T-cell (primary cell): ENCODE measurements at regions of chr6 and their contacts with region 1.

Region 1: GRCh38 chr6:5318617-5319272 is 57.4 kb downstream of the FARS2 start:
- DNase-seq: no peak
- ATAC-seq: no peak
- H3K4me3 ChIP-seq: no peak overlapping the region
- H3K4me3 Mint-ChIP-seq: no peak overlapping the region
- H3K27ac ChIP-seq: no peak overlapping the region
- H3K27ac Mint-ChIP-seq: no peak overlapping the region
- H3K4me1 ChIP-seq: no peaks in the 10 kb centered on the region
- H3K4me1 Mint-ChIP-seq: peaks cover 19 to 51% (median 48%) of the 10 kb centered on the region in 3 donors
- H3K27me3 ChIP-seq: no peaks in the 10 kb centered on the region
- H3K27me3 Mint-ChIP-seq: no peaks in the 10 kb centered on the region

Region 2: DNA sequence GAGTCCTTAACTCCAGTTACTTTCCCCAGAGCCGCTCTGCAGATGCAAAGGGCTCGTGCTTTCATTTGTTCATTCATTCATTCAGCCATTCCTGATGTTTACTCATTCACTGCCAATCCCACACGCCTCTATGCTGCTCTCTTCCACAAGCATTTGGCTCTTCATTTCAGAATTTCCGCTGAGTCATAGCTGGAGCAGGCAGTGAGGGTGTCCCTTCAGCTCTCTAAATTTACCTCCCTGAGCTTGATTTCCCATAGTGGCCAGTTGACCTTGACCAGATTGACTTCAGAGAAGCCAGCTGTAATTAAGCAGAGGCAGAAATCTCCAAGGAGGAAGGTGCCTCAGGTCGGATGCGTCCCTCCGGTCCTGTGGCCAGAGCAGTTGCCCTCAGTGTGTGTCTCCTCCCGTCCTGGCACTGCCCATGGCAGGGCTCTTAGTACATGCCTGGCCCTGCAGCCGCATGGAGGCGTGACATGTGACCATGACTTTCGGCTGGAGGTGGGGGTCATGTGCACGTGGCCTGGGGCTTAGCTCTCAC is 916.2 kb before region 1 on chr6:
- CTCF ChIA-PET with region 1: no interaction called
- POLR2A ChIA-PET with region 1: no interaction called
- DNase-seq: no peak
- ATAC-seq: no peak
- H3K4me3 ChIP-seq: no peak overlapping the region
- H3K4me3 Mint-ChIP-seq: no peak overlapping the region
- H3K27ac ChIP-seq: no peak overlapping the region
- H3K27ac Mint-ChIP-seq: no peak overlapping the region
- H3K4me1 ChIP-seq: no peaks in the 10 kb centered on the region
- H3K4me1 Mint-ChIP-seq: no peaks in the 10 kb centered on the region
- H3K27me3 ChIP-seq: peaks cover 0 to 15% of the 10 kb centered on the region in 2 experiments
- H3K27me3 Mint-ChIP-seq: peaks cover 6 to 32% of the 10 kb centered on the region in 2 donors

Region 3: GRCh38 chr6:5190507-5190906 is 128.2 kb before region 1 on chr6:
- CTCF ChIA-PET with region 1: no interaction called
- POLR2A ChIA-PET with region 1: no interaction called
- DNase-seq: no peak
- ATAC-seq: no peak
- H3K4me3 ChIP-seq: no peak overlapping the region
- H3K4me3 Mint-ChIP-seq: no peak overlapping the region
- H3K27ac ChIP-seq: no peak overlapping the region
- H3K27ac Mint-ChIP-seq: no peak overlapping the region
- H3K4me1 ChIP-seq: no peaks in the 10 kb centered on the region
- H3K4me1 Mint-ChIP-seq: no peaks in the 10 kb centered on the region
- H3K27me3 ChIP-seq: no peaks in the 10 kb centered on the region
- H3K27me3 Mint-ChIP-seq: no peaks in the 10 kb centered on the region

Region 4: DNA sequence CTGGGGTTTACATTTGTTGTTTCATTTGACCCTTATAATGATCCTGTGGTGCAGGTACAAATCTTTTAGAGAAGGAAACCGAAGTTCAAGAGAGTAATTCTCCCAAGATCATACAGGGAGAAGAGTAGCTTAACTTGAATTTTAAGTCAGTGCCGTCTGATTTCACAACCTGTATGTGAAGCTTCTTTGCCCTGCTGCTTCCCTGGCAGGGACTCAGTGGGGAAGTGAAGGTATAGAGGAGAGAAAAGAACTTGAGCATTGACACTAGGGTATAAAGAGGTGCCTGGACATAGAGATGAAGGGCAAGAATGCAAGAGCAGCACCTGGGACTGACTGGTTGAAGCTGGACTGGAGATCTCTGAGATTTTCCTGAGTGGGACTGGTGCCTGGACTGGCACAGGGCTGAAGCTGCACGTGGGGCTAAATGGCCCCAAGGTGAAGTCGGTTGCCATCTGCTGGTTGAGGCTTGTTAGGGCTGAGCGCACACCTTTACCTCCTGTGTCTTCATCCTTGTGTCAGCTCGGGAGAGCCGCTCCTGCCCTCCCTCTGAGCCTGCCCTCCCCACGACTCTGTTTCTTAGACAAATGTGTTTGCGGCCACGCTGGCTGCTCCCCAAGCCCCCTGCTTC is 15.6 kb before region 1 on chr6:
- CTCF ChIA-PET with region 1: no interaction called
- POLR2A ChIA-PET with region 1: interaction called in 1 of 2 experiments, 14 read pairs
- DNase-seq: peak; percentile 10 to 78 (median 44)
- ATAC-seq: peak; percentile 86 to 95 (median 90)
- H3K4me3 ChIP-seq: no peak overlapping the region
- H3K4me3 Mint-ChIP-seq: peak overlapping the region in 2 of 3 donors; percentile 32 to 41
- H3K27ac ChIP-seq: no peak overlapping the region
- H3K27ac Mint-ChIP-seq: peak overlapping the region in 1 of 2 donors; percentile 44
- H3K4me1 ChIP-seq: peaks cover 0 to 18% of the 10 kb centered on the region in 2 experiments
- H3K4me1 Mint-ChIP-seq: peaks cover 32 to 45% (median 40%) of the 10 kb centered on the region in 3 donors
- H3K27me3 ChIP-seq: no peaks in the 10 kb centered on the region
- H3K27me3 Mint-ChIP-seq: no peaks in the 10 kb centered on the region

Region 5: GRCh38 chr6:6474170-6474920 is 1155.6 kb after region 1 on chr6:
- CTCF ChIA-PET with region 1: interaction called in 1 of 2 experiments, 10 read pairs
- POLR2A ChIA-PET with region 1: no interaction called
- DNase-seq: no peak
- ATAC-seq: no peak
- H3K4me3 ChIP-seq: no peak overlapping the region
- H3K4me3 Mint-ChIP-seq: no peak overlapping the region
- H3K27ac ChIP-seq: no peak overlapping the region
- H3K27ac Mint-ChIP-seq: no peak overlapping the region
- H3K4me1 ChIP-seq: no peaks in the 10 kb centered on the region
- H3K4me1 Mint-ChIP-seq: no peaks in the 10 kb centered on the region
- H3K27me3 ChIP-seq: peaks cover 0 to 6% of the 10 kb centered on the region in 2 experiments
- H3K27me3 Mint-ChIP-seq: peaks cover 19 to 22% of the 10 kb centered on the region in 2 donors